ENCODE measurements at regions of chr18 and their contacts with region 1.

Region 1: GRCh38 chr18:58493516-58494253 is 135.2 kb downstream of the ALPK2 start:
- DNase-seq: no peak

Region 2: DNA sequence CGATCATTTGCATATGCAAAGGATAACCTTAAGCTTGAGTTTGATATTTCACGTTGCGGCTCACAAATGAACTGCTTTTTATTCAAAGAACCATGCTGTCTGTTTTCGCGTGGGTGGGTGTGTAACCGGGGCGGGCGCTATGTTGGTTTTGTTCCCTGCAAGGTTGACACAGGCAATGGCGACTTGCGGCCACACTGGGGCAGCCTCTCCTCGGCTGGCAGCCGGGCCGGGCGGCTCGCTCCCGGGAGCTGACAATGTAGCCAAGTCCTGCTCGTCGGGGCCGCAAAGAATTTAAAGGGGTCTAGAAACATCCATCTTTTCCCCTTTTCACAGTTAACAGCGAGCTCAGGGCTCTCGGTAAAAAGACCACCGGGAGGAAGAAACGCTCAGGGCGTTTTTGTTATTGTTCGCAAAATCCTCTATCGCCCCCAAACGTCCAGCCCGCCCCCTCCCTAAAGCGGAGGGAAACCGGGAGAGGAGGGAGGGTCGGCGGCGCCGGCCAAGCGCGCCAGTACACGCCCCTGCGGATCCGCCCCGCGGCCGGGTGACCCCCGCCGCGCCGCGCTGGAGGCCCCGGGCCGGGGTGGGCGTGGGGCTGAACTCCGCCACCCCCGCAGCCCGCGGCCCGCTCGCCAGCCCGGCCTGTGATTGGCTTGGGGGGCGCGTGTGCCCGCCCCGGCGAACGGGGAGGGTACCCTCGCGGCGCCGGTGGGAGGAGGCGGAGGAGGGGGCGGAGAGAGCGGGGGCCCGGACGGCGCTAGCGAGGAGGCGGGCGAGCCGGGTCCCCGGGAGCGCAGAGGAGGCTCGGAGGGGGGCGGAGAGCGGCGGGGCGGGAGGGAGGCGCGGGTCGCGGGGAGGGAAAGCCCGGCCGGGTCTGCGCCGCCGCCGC is 449.9 kb before region 1 on chr18 and contains the start of gene NEDD4L:
- intact Hi-C with region 1: loop called (anchors 5 kb)
- DNase-seq: peak; percentile 85
- total RNA-seq, gene NEDD4L: 49.3 TPM

Region 3: DNA sequence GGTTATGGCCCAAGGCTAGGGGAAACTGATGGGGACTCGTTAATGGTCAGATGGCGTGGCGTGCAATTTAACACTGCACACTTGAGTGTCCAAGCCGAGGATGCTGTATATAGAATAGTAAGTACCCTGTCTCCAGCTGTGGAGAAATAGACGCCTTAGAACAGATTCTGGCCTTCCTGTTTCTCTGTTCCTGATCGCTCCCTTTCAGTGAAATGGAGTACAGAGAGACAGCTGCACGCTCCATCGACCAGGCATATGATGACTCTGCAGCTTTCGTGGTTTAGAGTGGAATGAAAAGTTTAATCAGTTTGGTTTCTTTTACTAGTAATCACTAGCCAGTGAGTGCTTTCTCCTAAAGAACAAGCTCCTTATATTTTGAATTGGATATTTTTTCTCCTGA is 236.2 kb before region 1 on chr18:
- intact Hi-C with region 1: loop called (anchors 10 kb)
- DNase-seq: no peak

Region 4: DNA sequence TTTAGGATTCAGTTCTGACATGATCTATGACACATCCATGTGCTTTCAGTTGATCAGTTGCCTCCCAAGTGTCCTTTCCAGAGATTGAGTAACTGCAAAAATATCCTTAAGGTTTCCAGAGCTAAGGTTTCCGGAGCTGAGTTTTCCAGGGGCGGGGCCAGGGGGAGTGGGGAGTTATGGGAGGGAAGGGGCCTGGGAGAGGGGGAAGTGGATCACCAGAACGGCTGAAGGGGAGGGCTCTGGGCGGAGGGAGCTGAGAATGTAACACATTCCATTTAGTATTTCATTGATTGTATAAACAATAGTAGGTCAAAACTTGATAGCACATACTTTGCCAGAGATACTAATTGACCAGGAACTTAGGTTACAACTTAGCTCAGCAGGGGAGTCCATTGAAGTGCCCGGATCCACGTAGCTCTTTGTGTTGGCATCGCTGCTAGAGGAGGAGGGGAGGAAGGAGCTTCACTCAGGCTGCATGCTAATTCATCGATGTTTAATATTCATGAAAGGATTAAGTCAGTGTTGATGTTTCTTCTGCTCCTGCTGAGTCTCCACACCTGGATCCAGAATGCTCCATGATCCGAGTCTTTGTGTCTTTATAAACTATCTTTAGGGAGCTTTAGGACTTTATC is 154.6 kb before region 1 on chr18:
- intact Hi-C with region 1: loop called (anchors 10 kb)
- DNase-seq: no peak

Region 5: DNA sequence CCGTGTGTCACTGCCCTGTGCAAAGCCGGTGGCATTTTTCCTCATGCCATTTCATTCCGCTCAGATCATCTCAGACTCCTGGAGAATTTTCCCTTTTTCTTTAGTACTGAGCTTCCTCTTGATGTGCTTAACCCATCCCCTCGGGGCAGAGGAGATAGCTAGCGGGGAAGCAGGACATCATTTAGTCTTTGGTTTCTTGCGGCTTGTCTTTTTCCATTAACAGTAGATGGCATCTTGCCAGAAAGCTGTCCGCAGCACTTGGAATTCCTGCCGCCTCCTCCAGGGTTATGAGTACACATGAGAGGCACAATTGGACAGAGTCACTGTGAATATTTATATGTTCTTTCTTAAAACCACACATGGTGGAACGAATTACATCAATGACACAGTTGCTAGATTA is 91.4 kb before region 1 on chr18:
- intact Hi-C with region 1: loop called (anchors 5 kb)
- DNase-seq: no peak